MCF 10A (cell line): ENCODE measurements at regions of chr1 and their contacts with region 1.

Region 1: DNA sequence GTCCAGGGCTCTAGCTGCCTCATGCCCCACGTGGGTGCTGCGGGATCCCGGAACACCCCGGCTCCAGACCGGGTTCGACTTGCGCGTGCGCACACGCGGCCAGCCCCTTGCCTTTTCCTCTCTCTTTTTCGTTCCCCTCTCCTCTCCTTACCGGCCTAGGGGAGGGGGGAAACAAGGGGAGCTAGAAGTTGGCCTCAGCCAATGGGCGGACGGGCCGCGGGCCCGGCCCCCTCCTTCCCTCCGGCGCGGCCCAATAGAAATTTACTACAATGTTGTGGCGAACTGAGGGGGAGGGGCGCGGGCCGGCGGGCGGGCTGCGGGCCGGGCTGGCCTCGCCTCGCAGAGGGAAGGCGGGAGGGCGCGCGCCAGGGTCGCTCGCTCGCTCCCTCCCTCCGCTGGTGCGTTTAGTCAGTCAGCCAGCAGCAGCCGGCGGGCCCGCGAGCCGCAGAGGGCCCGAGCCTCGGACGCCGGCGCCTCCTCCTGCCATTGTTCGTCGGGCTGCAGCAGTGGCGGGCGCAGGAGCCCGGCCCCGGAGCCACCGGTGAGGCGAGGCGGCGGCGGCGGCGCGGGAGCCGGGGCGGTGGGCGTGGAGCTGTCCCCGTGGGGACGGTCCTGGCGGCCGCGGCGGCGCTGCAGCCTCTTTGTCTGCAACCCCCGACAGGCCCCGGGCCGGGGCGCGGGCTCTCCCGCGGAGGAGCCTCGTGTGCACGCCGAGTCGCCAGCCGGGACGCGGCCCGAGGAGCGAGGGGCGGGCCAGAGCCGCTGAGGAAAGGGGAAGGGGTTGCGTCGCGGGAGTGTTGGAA is at the start of gene EPB41:
- DNase-seq: peak; percentile 90
- H3K4me3 Mint-ChIP-seq: peak within 1 kb of the TSS; percentile 81
- H3K27ac Mint-ChIP-seq: peak within 1 kb of the TSS; percentile 79
- H3K4me1 Mint-ChIP-seq: peaks cover 6% of the 10 kb centered on the region
- H3K27me3 Mint-ChIP-seq: no peaks in the 10 kb centered on the region
- CTCF ChIP-seq: no peak
- total RNA-seq, gene EPB41: 15.0 and 23.0 TPM in 2 replicates

Region 2: GRCh38 chr1:28830814-28831213 is 83.6 kb before region 1 on chr1:
- CTCF ChIA-PET with region 1: no interaction called
- POLR2A ChIA-PET with region 1: no interaction called
- intact Hi-C with region 1: no loop called
- DNase-seq: no peak
- H3K4me3 Mint-ChIP-seq: no peak overlapping the region
- H3K27ac Mint-ChIP-seq: no peak overlapping the region
- H3K4me1 Mint-ChIP-seq: no peaks in the 10 kb centered on the region
- H3K27me3 Mint-ChIP-seq: peaks cover 11% of the 10 kb centered on the region
- CTCF ChIP-seq: no peak

Region 3: GRCh38 chr1:28845786-28846543 is 68.5 kb before region 1 on chr1:
- CTCF ChIA-PET with region 1: no interaction called
- POLR2A ChIA-PET with region 1: no interaction called
- intact Hi-C with region 1: no loop called
- DNase-seq: peak; percentile 27
- H3K4me3 Mint-ChIP-seq: no peak overlapping the region
- H3K27ac Mint-ChIP-seq: no peak overlapping the region
- H3K4me1 Mint-ChIP-seq: no peaks in the 10 kb centered on the region
- H3K27me3 Mint-ChIP-seq: no peaks in the 10 kb centered on the region
- CTCF ChIP-seq: no peak

Region 4: GRCh38 chr1:28886731-28887418 is 27.6 kb before region 1 on chr1:
- CTCF ChIA-PET with region 1: interaction called, 3 read pairs
- POLR2A ChIA-PET with region 1: interaction called, 22 read pairs
- intact Hi-C with region 1: no loop called
- DNase-seq: peak; percentile 90
- H3K4me3 Mint-ChIP-seq: peak overlapping the region; percentile 95
- H3K27ac Mint-ChIP-seq: peak overlapping the region; percentile 89
- H3K4me1 Mint-ChIP-seq: peaks cover 40% of the 10 kb centered on the region
- H3K27me3 Mint-ChIP-seq: no peaks in the 10 kb centered on the region
- CTCF ChIP-seq: no peak

Region 5: GRCh38 chr1:28902738-28903137 is 11.7 kb before region 1 on chr1:
- CTCF ChIA-PET with region 1: interaction called, 7 read pairs
- POLR2A ChIA-PET with region 1: interaction called, 14 read pairs
- intact Hi-C with region 1: no loop called
- DNase-seq: no peak
- H3K4me3 Mint-ChIP-seq: no peak overlapping the region
- H3K27ac Mint-ChIP-seq: no peak overlapping the region
- H3K4me1 Mint-ChIP-seq: no peaks in the 10 kb centered on the region
- H3K27me3 Mint-ChIP-seq: no peaks in the 10 kb centered on the region
- CTCF ChIP-seq: no peak

Region 6: GRCh38 chr1:28926629-28927265 is 12.3 kb after region 1 on chr1:
- CTCF ChIA-PET with region 1: interaction called, 3 read pairs
- POLR2A ChIA-PET with region 1: interaction called, 14 read pairs
- intact Hi-C with region 1: no loop called
- DNase-seq: no peak
- H3K4me3 Mint-ChIP-seq: no peak overlapping the region
- H3K27ac Mint-ChIP-seq: peak overlapping the region; percentile 91
- H3K4me1 Mint-ChIP-seq: peaks cover 20% of the 10 kb centered on the region
- H3K27me3 Mint-ChIP-seq: no peaks in the 10 kb centered on the region
- CTCF ChIP-seq: no peak

Region 7: GRCh38 chr1:29050166-29050565 is 135.7 kb after region 1 on chr1:
- CTCF ChIA-PET with region 1: no interaction called
- POLR2A ChIA-PET with region 1: no interaction called
- intact Hi-C with region 1: no loop called
- DNase-seq: no peak
- H3K4me3 Mint-ChIP-seq: no peak overlapping the region
- H3K27ac Mint-ChIP-seq: no peak overlapping the region
- H3K4me1 Mint-ChIP-seq: no peaks in the 10 kb centered on the region
- H3K27me3 Mint-ChIP-seq: no peaks in the 10 kb centered on the region
- CTCF ChIP-seq: no peak